ENCODE measurements at regions of chr17 and their contacts with region 1.

Region 1: GRCh38 chr17:1915889-1916288 is 86.1 kb downstream of the RPA1 start:
- DNase-seq: no peak
- ATAC-seq: no peak
- H3K4me3 ChIP-seq: no peak overlapping the region
- H3K27ac ChIP-seq: no peak overlapping the region
- H3K4me1 ChIP-seq: no peaks in the 10 kb centered on the region
- H3K27me3 ChIP-seq: peaks cover 0 to 31% (median 20%) of the 10 kb centered on the region in 7 donors
- CTCF ChIP-seq: no peak

Region 2: GRCh38 chr17:1796800-1797199 is 119.1 kb before region 1 on chr17:
- intact Hi-C with region 1: no loop called
- DNase-seq: peak in 1 of 2 donors; percentile 36
- ATAC-seq: peak; percentile 73 to 93 (median 83)
- H3K4me3 ChIP-seq: no peak overlapping the region
- H3K27ac ChIP-seq: peak overlapping the region; percentile 56 to 85 (median 78)
- H3K4me1 ChIP-seq: peaks cover 0 to 47% (median 23%) of the 10 kb centered on the region in 9 donors
- H3K27me3 ChIP-seq: no peaks in the 10 kb centered on the region
- CTCF ChIP-seq: no peak

Region 3: DNA sequence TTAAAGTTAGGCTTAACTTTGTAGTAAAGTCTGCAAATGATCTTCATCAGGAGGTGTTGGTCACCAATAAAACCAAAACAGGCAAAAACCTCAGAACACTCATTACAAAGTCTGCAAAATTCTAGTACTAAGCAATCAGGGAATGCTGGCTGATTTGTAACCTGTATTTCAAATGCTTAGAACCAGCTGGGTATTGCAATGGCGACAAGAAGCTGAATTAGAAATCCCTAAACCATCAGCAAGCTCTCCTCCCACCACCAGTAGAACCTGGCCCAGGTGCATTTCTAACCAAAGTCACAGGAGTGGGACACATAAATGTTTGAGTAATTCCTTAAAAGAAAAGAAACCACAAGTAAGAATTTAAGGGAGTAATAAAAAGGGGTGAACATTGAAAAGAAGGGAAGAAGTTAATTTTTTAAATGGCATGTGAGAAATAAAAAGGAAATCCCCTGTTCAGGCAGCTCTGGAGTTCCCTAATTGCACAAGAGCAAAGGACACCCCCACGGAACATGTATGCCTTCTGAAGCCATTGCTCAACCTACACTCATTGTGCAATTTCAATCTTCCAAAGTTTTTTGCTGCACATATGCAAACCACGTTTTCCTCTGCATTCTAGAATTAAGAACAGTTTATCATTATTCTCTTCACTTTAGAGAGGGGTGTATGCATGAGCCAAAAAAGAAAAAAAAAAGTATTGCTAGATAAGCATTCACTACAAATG is 241.9 kb after region 1 on chr17:
- intact Hi-C with region 1: no loop called
- DNase-seq: no peak
- ATAC-seq: peak in 6 of 8 donors; percentile 22 to 79 (median 70)
- H3K4me3 ChIP-seq: no peak overlapping the region
- H3K27ac ChIP-seq: peak overlapping the region in 3 of 10 donors; percentile 35 to 79 (median 57)
- H3K4me1 ChIP-seq: peaks cover 0 to 36% (median 9%) of the 10 kb centered on the region in 9 donors
- H3K27me3 ChIP-seq: no peaks in the 10 kb centered on the region
- CTCF ChIP-seq: no peak

Region 4: DNA sequence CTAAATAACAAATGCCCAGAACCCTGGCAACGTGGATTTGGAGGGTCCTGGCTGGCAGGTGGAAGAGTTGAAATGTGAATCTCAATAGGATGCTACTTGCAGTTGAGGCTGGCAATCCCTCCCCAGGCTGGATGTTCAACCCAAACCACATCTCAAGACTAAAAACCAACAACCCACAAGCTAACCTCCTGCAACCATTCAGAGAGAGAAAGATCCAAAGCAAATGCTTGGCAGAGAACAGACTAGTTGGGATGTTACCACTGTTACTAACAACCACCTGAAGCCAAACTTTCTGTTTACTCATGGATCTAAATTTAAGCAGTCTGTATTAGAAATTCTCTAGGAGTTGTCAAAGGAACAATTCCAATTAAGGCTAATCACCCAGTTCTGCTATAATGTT is 359.8 kb after region 1 on chr17:
- intact Hi-C with region 1: loop called in 1 of 10 experiments (anchors 10 kb)
- DNase-seq: no peak
- ATAC-seq: no peak
- H3K4me3 ChIP-seq: no peak overlapping the region
- H3K27ac ChIP-seq: no peak overlapping the region
- H3K4me1 ChIP-seq: no peaks in the 10 kb centered on the region
- H3K27me3 ChIP-seq: no peaks in the 10 kb centered on the region
- CTCF ChIP-seq: no peak

Measured in heart right ventricle (tissue), 16 donors.